HCT116 (cell line): ENCODE measurements at regions of chr6 and their contacts with region 1.

Region 1: DNA sequence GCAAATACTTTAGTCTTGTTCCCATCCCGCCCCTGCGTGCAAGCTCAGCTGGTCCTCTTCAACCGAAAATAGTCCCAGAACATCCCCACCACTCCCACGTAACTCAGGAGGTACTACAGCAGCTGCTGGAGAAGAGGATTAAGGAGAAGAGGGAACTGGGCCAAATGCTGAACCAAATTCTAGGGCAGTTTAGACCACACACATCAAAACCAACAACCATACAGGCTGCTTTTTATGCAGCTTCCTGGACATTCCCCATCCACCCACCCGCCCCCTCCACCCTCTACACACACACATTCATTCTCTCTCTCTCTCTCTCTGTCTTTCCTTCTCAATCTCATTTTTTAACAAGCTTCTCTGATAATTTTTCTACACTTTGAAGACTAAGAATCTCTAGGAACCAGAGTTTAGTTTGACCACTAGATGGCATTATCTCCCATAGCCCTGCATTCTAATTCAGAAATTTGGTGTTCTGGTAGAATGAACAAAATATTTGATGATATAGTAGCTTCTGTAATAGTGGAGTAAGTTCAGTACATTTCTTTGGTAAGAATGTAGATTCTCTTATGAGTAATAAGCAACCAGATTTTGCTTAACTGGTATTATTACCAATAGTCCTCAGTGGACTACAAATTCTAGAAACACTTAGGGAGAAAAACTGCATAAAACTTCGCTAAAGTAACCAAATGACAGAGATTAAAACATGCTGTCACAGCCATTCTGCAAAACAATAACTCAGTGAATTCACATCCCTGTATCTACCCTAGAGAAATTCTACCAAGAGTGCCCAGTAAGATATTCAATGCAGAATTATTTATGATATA is 52.1 kb upstream of the BEND6 start:
- DNase-seq: no peak
- ATAC-seq: peak; percentile 26; the same call in 1 of the 2 replicates
- H3K4me3 ChIP-seq: no peak overlapping the region
- H3K27ac ChIP-seq: peak overlapping the region; percentile 48; the same call in 1 of the 2 replicates
- H3K4me1 ChIP-seq: peaks cover 24 to 47% of the 10 kb centered on the region in 2 experiments
- H3K27me3 ChIP-seq: no peaks in the 10 kb centered on the region
- CTCF ChIP-seq: peak; percentile 59 to 82 (median 66); a peak in 5 of 6 replicates
- POLR2A ChIP-seq: no peak
- RAD21 ChIP-seq: peak; percentile 72

Region 2: GRCh38 chr6:56335726-56336125 is 567.1 kb before region 1 on chr6:
- CTCF ChIA-PET with region 1: no interaction called
- POLR2A ChIA-PET with region 1: no interaction called
- RAD21 ChIA-PET with region 1: no interaction called
- intact Hi-C with region 1: no loop called
- DNase-seq: peak; percentile 59
- ATAC-seq: peak; percentile 44
- H3K4me3 ChIP-seq: no peak overlapping the region
- H3K27ac ChIP-seq: no peak overlapping the region
- H3K4me1 ChIP-seq: peaks cover 0 to 11% of the 10 kb centered on the region in 2 experiments; a peak in 2 of 4 replicates
- H3K27me3 ChIP-seq: no peaks in the 10 kb centered on the region
- CTCF ChIP-seq: no peak
- POLR2A ChIP-seq: no peak
- RAD21 ChIP-seq: no peak

Region 3: DNA sequence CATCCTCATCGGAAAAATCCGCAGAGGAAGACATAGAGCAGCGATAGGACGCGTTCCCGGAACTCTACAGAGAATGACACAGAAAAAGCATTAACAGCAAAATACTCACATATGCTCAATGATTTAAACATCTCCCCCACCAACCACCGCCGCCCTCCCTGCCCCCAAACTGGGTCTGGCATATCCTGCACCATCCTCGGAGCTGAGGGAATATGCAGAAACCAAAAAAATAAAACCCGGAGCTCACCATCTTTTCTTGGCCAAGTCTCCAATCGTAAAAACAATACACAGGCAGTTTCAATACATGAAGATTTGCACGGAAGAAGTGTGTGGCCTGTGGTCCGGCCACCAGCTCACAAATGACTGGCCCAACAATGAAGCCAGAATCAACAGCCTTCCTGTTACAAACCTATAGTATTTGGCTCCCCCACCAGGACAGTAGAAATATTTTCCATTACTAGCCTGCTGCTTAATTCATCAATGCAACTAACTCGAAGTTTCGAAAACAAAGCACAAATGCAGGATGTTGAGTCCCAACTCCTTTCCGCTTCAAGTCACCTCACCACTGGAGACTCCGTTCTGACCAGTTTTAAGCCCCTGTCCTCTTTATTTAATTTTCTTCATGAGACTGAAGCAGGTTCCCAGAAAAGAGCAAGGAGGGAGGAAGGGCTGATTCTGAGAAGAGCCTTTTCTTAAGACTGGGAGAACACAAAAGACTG is 51.2 kb before region 1 on chr6:
- CTCF ChIA-PET with region 1: no interaction called
- POLR2A ChIA-PET with region 1: no interaction called
- RAD21 ChIA-PET with region 1: no interaction called
- intact Hi-C with region 1: no loop called
- DNase-seq: no peak
- ATAC-seq: peak; percentile 77
- H3K4me3 ChIP-seq: no peak overlapping the region
- H3K27ac ChIP-seq: peak overlapping the region; percentile 21
- H3K4me1 ChIP-seq: peaks cover 42 to 47% of the 10 kb centered on the region in 2 experiments
- H3K27me3 ChIP-seq: no peaks in the 10 kb centered on the region
- CTCF ChIP-seq: peak; percentile 48 to 64 (median 48); a peak in 4 of 6 replicates
- POLR2A ChIP-seq: no peak
- RAD21 ChIP-seq: peak; percentile 81

Region 4: GRCh38 chr6:56890683-56891429 is 12.0 kb before region 1 on chr6:
- CTCF ChIA-PET with region 1: interaction called, 55 read pairs
- POLR2A ChIA-PET with region 1: no interaction called
- RAD21 ChIA-PET with region 1: no interaction called
- intact Hi-C with region 1: no loop called
- DNase-seq: no peak
- ATAC-seq: no peak
- H3K4me3 ChIP-seq: no peak overlapping the region
- H3K27ac ChIP-seq: no peak overlapping the region
- H3K4me1 ChIP-seq: peaks cover 0 to 16% of the 10 kb centered on the region in 2 experiments; a peak in 2 of 4 replicates
- H3K27me3 ChIP-seq: no peaks in the 10 kb centered on the region
- CTCF ChIP-seq: no peak
- POLR2A ChIP-seq: no peak
- RAD21 ChIP-seq: no peak

Region 5: GRCh38 chr6:56938649-56939191 is 35.9 kb after region 1 on chr6:
- CTCF ChIA-PET with region 1: interaction called, 10 read pairs
- POLR2A ChIA-PET with region 1: no interaction called
- RAD21 ChIA-PET with region 1: interaction called in 1 of 2 experiments, 3 read pairs
- intact Hi-C with region 1: no loop called
- DNase-seq: peak; percentile 100
- ATAC-seq: peak; percentile 93
- H3K4me3 ChIP-seq: peak overlapping the region in 1 of 2 experiments; percentile 42; a peak in 2 of 4 replicates
- H3K27ac ChIP-seq: peak overlapping the region; percentile 90
- H3K4me1 ChIP-seq: peaks cover 42 to 58% of the 10 kb centered on the region in 2 experiments
- H3K27me3 ChIP-seq: no peaks in the 10 kb centered on the region
- CTCF ChIP-seq: no peak
- POLR2A ChIP-seq: no peak
- RAD21 ChIP-seq: peak; percentile 22

Region 6: GRCh38 chr6:57021086-57021720 is 118.3 kb after region 1 on chr6:
- CTCF ChIA-PET with region 1: interaction called, 8 read pairs
- POLR2A ChIA-PET with region 1: no interaction called
- RAD21 ChIA-PET with region 1: no interaction called
- intact Hi-C with region 1: loop called (anchors 1 kb)
- DNase-seq: peak; percentile 51
- ATAC-seq: peak; percentile 96
- H3K4me3 ChIP-seq: no peak overlapping the region
- H3K27ac ChIP-seq: no peak overlapping the region
- H3K4me1 ChIP-seq: peaks cover 0 to 4% of the 10 kb centered on the region in 2 experiments; a peak in 1 of 4 replicates
- H3K27me3 ChIP-seq: no peaks in the 10 kb centered on the region
- CTCF ChIP-seq: peak; percentile 39 to 64 (median 52); a peak in 4 of 6 replicates
- POLR2A ChIP-seq: no peak
- RAD21 ChIP-seq: peak; percentile 59

Region 7: GRCh38 chr6:57172136-57173055 is 269.5 kb after region 1 on chr6 and contains the start of gene BAG2:
- CTCF ChIA-PET with region 1: interaction called, 4 read pairs
- POLR2A ChIA-PET with region 1: no interaction called
- RAD21 ChIA-PET with region 1: no interaction called
- intact Hi-C with region 1: loop called (anchors 2 kb)
- DNase-seq: peak; percentile 74
- ATAC-seq: peak; percentile 90
- H3K4me3 ChIP-seq: peak within 1 kb of the TSS; percentile 78 to 85
- H3K27ac ChIP-seq: peak within 1 kb of the TSS; percentile 90
- H3K4me1 ChIP-seq: peaks cover 6 to 20% of the 10 kb centered on the region in 2 experiments
- H3K27me3 ChIP-seq: no peaks in the 10 kb centered on the region
- CTCF ChIP-seq: no peak
- POLR2A ChIP-seq: peak; percentile 96
- RAD21 ChIP-seq: peak; percentile 9; the same call in 1 of the 2 replicates
- total RNA-seq, gene BAG2: 13.5 TPM

Region 8: DNA sequence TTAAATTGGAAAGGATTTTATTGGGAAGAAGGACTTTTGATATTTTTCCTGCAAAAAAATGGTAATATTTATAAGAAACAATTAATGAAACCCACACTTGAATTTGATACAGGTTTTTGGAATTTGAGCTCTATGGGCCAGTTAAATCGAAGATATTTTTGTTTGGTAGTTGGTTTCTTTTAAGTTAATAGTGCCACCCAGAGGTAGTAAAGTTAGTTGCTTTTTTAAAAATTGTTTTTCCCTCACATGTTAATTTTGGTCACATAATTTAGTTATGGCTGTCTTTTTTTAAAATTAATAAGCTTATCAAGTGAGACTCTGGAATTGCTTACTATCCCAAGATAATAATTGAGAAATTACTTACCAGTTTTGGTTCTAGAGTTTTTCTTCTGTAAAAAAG is 421.7 kb after region 1 on chr6:
- CTCF ChIA-PET with region 1: interaction called, 14 read pairs
- POLR2A ChIA-PET with region 1: no interaction called
- RAD21 ChIA-PET with region 1: no interaction called
- intact Hi-C with region 1: loop called (anchors 2 kb)
- DNase-seq: no peak
- ATAC-seq: no peak
- H3K4me3 ChIP-seq: no peak overlapping the region
- H3K27ac ChIP-seq: no peak overlapping the region
- H3K4me1 ChIP-seq: no peaks in the 10 kb centered on the region
- H3K27me3 ChIP-seq: no peaks in the 10 kb centered on the region
- CTCF ChIP-seq: peak; percentile 13 to 53 (median 34); a peak in 3 of 6 replicates
- POLR2A ChIP-seq: no peak
- RAD21 ChIP-seq: peak; percentile 53